GM12878 (cell line): ENCODE measurements at regions of chr3 and their contacts with region 1.

Region 1: GRCh38 chr3:138923531-138923994 is 23.4 kb downstream of the FOXL2 start:
- DNase-seq: peak; percentile 35
- ATAC-seq: peak; percentile 98
- H3K4me3 ChIP-seq: no peak overlapping the region
- H3K27ac ChIP-seq: no peak overlapping the region
- H3K4me1 ChIP-seq: no peaks in the 10 kb centered on the region
- H3K27me3 ChIP-seq: no peaks in the 10 kb centered on the region
- CTCF ChIP-seq: peak; percentile 90 to 93 (median 91)
- EP300 ChIP-seq: no peak
- POLR2A ChIP-seq: no peak
- RAD21 ChIP-seq: peak; percentile 81

Region 2: GRCh38 chr3:138332472-138333076 is 591.0 kb before region 1 on chr3:
- CTCF ChIA-PET with region 1: interaction called, 4 read pairs
- POLR2A ChIA-PET with region 1: no interaction called
- RAD21 ChIA-PET with region 1: no interaction called
- SMC1A ChIA-PET with region 1: no interaction called
- in situ Hi-C with region 1: no loop called
- intact Hi-C with region 1: loop called (anchors 2 kb)
- DNase-seq: no peak
- ATAC-seq: no peak
- H3K4me3 ChIP-seq: no peak overlapping the region
- H3K27ac ChIP-seq: no peak overlapping the region
- H3K4me1 ChIP-seq: peaks cover 7% of the 10 kb centered on the region
- H3K27me3 ChIP-seq: peaks cover 2 to 16% of the 10 kb centered on the region in 2 experiments; a peak in 3 of 4 replicates
- CTCF ChIP-seq: peak; percentile 24 to 49 (median 42); a peak in 5 of 6 replicates
- EP300 ChIP-seq: no peak
- POLR2A ChIP-seq: no peak
- RAD21 ChIP-seq: peak; percentile 64

Region 3: GRCh38 chr3:138423316-138423715 is 500.2 kb before region 1 on chr3:
- CTCF ChIA-PET with region 1: interaction called, 51 read pairs
- POLR2A ChIA-PET with region 1: no interaction called
- RAD21 ChIA-PET with region 1: interaction called, 5 read pairs
- SMC1A ChIA-PET with region 1: interaction called, 14 read pairs
- in situ Hi-C with region 1: loop called (anchors 5 kb)
- intact Hi-C with region 1: no loop called
- DNase-seq: no peak
- ATAC-seq: no peak
- H3K4me3 ChIP-seq: no peak overlapping the region
- H3K27ac ChIP-seq: no peak overlapping the region
- H3K4me1 ChIP-seq: no peaks in the 10 kb centered on the region
- H3K27me3 ChIP-seq: no peaks in the 10 kb centered on the region
- CTCF ChIP-seq: no peak
- EP300 ChIP-seq: no peak
- POLR2A ChIP-seq: no peak
- RAD21 ChIP-seq: no peak

Region 4: GRCh38 chr3:138686771-138687221 is 236.8 kb before region 1 on chr3:
- CTCF ChIA-PET with region 1: interaction called, 39 read pairs
- POLR2A ChIA-PET with region 1: no interaction called
- RAD21 ChIA-PET with region 1: interaction called, 4 read pairs
- SMC1A ChIA-PET with region 1: interaction called, 5 read pairs
- in situ Hi-C with region 1: no loop called
- intact Hi-C with region 1: no loop called
- DNase-seq: peak; percentile 82
- ATAC-seq: peak; percentile 99
- H3K4me3 ChIP-seq: no peak overlapping the region
- H3K27ac ChIP-seq: peak overlapping the region; percentile 53; the same call in 1 of the 2 replicates
- H3K4me1 ChIP-seq: peaks cover 14% of the 10 kb centered on the region
- H3K27me3 ChIP-seq: no peaks in the 10 kb centered on the region
- CTCF ChIP-seq: no peak
- EP300 ChIP-seq: peak; percentile 56 to 76; a peak in 1 of 4 replicates
- POLR2A ChIP-seq: no peak
- RAD21 ChIP-seq: no peak

Region 5: GRCh38 chr3:138935848-138936740 is 12.5 kb after region 1 on chr3:
- CTCF ChIA-PET with region 1: interaction called, 38 read pairs
- POLR2A ChIA-PET with region 1: no interaction called
- RAD21 ChIA-PET with region 1: interaction called, 3 read pairs
- SMC1A ChIA-PET with region 1: interaction called, 18 read pairs
- in situ Hi-C with region 1: no loop called
- intact Hi-C with region 1: no loop called
- DNase-seq: no peak
- ATAC-seq: peak; percentile 89
- H3K4me3 ChIP-seq: no peak overlapping the region; the same call in 1 of the 2 replicates
- H3K27ac ChIP-seq: no peak overlapping the region
- H3K4me1 ChIP-seq: no peaks in the 10 kb centered on the region
- H3K27me3 ChIP-seq: peaks cover 27 to 47% of the 10 kb centered on the region in 2 experiments
- CTCF ChIP-seq: peak; percentile 71 to 92 (median 82)
- EP300 ChIP-seq: no peak
- POLR2A ChIP-seq: no peak
- RAD21 ChIP-seq: peak; percentile 33; the same call in 1 of the 2 replicates